ENCODE measurements at regions of chr20 and their contacts with region 1.

Region 1: GRCh38 chr20:54103067-54103761 is 32.8 kb upstream of the BCAS1 start:
- DNase-seq: peak; percentile 56
- H3K4me3 ChIP-seq: no peak overlapping the region
- H3K27ac ChIP-seq: no peak overlapping the region
- H3K4me1 ChIP-seq: no peaks in the 10 kb centered on the region
- H3K27me3 ChIP-seq: no peaks in the 10 kb centered on the region
- CTCF ChIP-seq: peak; percentile 79
- EP300 ChIP-seq: no peak
- RAD21 ChIP-seq: peak; percentile 63

Region 2: GRCh38 chr20:54115151-54115854 is 12.1 kb after region 1 on chr20:
- CTCF ChIA-PET with region 1: interaction called, 12 read pairs
- POLR2A ChIA-PET with region 1: no interaction called
- DNase-seq: no peak
- H3K4me3 ChIP-seq: no peak overlapping the region
- H3K27ac ChIP-seq: no peak overlapping the region
- H3K4me1 ChIP-seq: no peaks in the 10 kb centered on the region
- H3K27me3 ChIP-seq: no peaks in the 10 kb centered on the region
- CTCF ChIP-seq: no peak
- EP300 ChIP-seq: no peak
- RAD21 ChIP-seq: no peak

Region 3: GRCh38 chr20:54126809-54127655 is 23.8 kb after region 1 on chr20:
- CTCF ChIA-PET with region 1: interaction called, 11 read pairs
- POLR2A ChIA-PET with region 1: no interaction called
- DNase-seq: no peak
- H3K4me3 ChIP-seq: no peak overlapping the region
- H3K27ac ChIP-seq: no peak overlapping the region
- H3K4me1 ChIP-seq: peaks cover 0 to 11% of the 10 kb centered on the region in 2 experiments
- H3K27me3 ChIP-seq: no peaks in the 10 kb centered on the region
- CTCF ChIP-seq: no peak
- EP300 ChIP-seq: no peak
- RAD21 ChIP-seq: no peak

Region 4: DNA sequence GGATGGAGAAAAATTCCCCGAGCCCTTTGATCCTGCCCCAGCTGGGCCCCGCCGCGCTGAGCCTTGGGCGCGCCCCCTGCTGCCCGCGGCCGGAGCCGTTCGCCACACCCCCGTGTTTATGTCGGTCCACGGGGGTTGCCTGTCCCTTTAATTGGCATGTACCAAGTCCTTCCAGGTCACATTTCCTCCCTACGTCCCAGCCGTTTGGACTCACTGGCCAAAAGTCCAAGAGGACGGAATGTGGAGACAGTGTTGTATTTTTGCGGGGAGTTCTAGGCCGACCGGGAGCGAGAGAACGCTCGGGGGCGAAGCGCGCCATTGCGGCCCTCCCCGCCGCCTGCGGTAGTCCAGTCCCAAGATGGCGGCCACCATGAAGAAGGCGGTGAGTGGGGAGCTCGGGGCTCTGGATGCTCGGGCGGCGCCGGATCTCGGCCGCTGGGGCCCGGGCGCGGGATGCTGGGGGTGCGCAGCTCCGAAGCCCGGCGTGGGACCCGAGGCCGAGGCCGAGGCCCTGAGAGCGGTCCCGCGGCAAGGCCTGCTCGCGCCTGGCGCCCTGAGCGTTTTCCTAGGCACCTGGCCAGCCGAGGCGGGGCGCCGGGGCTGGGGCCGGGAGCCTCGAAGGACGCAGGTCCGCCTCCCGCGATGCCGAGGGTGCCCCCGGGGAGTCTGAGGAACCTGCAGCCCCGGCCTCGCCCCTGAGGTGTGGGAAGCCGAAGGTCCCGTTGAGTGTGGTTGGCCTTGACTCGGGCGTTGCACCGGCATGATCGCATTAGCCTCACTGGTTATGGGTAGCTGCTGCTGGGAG is 104.7 kb after region 1 on chr20 and contains the start of gene PFDN4:
- CTCF ChIA-PET with region 1: interaction called, 499 read pairs
- POLR2A ChIA-PET with region 1: interaction called, 3 read pairs
- DNase-seq: peak; percentile 98
- H3K4me3 ChIP-seq: peak within 1 kb of the TSS; percentile 88 to 97
- H3K27ac ChIP-seq: peak within 1 kb of the TSS; percentile 88 to 98
- H3K4me1 ChIP-seq: peaks cover 5 to 9% of the 10 kb centered on the region in 2 experiments; a peak in 2 of 4 replicates
- H3K27me3 ChIP-seq: no peaks in the 10 kb centered on the region
- CTCF ChIP-seq: peak; percentile 83
- EP300 ChIP-seq: peak in 1 of 2 experiments; percentile 76; a peak in 1 of 4 replicates
- RAD21 ChIP-seq: peak; percentile 35
- polyA plus RNA-seq, gene PFDN4: 44.0 and 51.4 TPM in 2 replicates